ENCODE measurements at regions of chr5 and their contacts with region 1.

Region 1: GRCh38 chr5:135191084-135191826 is 157.2 kb upstream of the PITX1 start:
- DNase-seq: no peak
- H3K4me3 ChIP-seq: peak overlapping the region; percentile 30 to 71 (median 48)
- H3K27ac ChIP-seq: peak overlapping the region; percentile 90 to 97 (median 94)
- H3K4me1 ChIP-seq: peaks cover 12 to 97% (median 44%) of the 10 kb centered on the region in 3 donors
- H3K27me3 ChIP-seq: peaks cover 0 to 8% (median 0%) of the 10 kb centered on the region in 4 donors
- CTCF ChIP-seq: peak; percentile 82 to 98 (median 95)
- POLR2A ChIP-seq: peak in 2 of 4 donors; percentile 47 to 70

Region 2: GRCh38 chr5:135034236-135034962 is 156.9 kb before region 1 on chr5:
- intact Hi-C with region 1: loop called (anchors 2 kb)
- DNase-seq: no peak
- H3K4me3 ChIP-seq: peak overlapping the region; percentile 79 to 92 (median 88)
- H3K27ac ChIP-seq: peak overlapping the region; percentile 96 to 99 (median 98)
- H3K4me1 ChIP-seq: peaks cover 11 to 71% (median 27%) of the 10 kb centered on the region in 3 donors
- H3K27me3 ChIP-seq: peaks cover 0 to 99% (median 2%) of the 10 kb centered on the region in 4 donors
- CTCF ChIP-seq: no peak
- POLR2A ChIP-seq: peak in 2 of 4 donors; percentile 34 to 40

Measured in esophagus squamous epithelium (tissue), 5 donors.